Ovary (tissue), 10 donors: ENCODE measurements at regions of chr2 and their contacts with region 1.

Region 1: DNA sequence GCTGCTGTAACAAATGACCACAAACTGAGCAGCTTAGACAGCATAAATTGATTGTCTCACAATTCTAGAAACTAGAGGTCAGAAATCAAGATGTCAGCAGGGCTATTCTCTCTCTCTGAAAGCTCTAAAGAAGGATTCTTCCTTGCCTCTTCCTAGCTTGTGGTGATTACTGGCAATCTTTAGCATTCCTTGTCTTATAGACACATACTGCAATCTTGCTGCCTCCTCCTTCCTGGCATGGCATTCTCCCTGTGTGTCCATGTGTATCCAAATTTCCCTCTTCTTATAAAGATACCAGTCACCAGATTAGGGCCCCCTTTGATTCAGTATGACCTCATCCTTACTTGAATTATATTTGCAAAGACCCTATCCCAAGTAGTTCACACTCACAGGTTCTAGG is 2.3 kb downstream of the ASB3 start:
- DNase-seq: no peak
- H3K4me3 ChIP-seq: no peak overlapping the region
- H3K27ac ChIP-seq: no peak overlapping the region
- H3K4me1 ChIP-seq: peaks cover 10% of the 10 kb centered on the region
- H3K27me3 ChIP-seq: no peaks in the 10 kb centered on the region
- CTCF ChIP-seq: no peak
- EP300 ChIP-seq: no peak
- POLR2A ChIP-seq: no peak

Region 2: GRCh38 chr2:55282110-55282917 is 1497.9 kb after region 1 on chr2:
- intact Hi-C with region 1: loop called in 1 of 4 experiments (anchors 5 kb)
- DNase-seq: peak; percentile 80 to 90 (median 85)
- H3K4me3 ChIP-seq: peak overlapping the region; percentile 54
- H3K27ac ChIP-seq: peak overlapping the region; percentile 88 to 93
- H3K4me1 ChIP-seq: peaks cover 2% of the 10 kb centered on the region
- H3K27me3 ChIP-seq: no peaks in the 10 kb centered on the region
- CTCF ChIP-seq: no peak
- EP300 ChIP-seq: no peak
- POLR2A ChIP-seq: peak; percentile 35